ENCODE measurements at regions of chr1 and their contacts with region 1.

Region 1: GRCh38 chr1:226407497-226408284 is at the start of gene PARP1:
- DNase-seq: no peak
- H3K4me3 ChIP-seq: peak within 1 kb of the TSS; percentile 81
- H3K27ac ChIP-seq: peak within 1 kb of the TSS; percentile 52
- H3K27me3 ChIP-seq: peaks cover 7% of the 10 kb centered on the region
- CTCF ChIP-seq: peak; percentile 31; the same call in 1 of the 2 replicates
- polyA plus RNA-seq, gene PARP1: 101 and 111 TPM in 2 replicates

Region 2: DNA sequence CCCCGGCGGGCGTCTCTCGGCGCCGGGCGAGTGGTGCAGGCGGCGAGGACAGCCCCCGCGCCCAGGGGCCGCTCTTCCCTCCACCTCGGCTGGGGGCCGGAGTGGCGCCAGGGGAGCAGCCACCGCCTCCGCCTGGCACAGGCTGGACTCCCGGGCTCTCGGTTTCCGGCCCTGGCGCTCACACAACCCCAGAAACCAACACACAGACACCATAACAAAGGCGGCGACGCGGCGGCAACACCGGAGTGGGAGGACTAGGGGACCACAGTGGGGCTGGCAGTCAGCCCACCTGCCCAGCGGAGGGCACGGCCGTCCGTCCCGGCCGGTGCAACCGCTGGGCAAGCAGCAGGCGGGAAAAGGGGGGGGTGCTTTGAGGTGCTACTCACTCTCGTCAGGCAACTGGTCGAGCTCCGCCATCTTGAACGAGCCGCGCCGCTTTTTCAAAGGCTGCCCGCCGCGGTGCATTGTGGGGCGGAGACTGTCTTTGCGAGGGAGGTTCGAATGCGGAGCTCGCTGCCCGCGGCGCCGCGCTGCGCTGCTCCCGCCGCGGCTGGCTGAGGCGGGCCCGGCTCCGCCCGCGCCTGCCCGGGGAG is 98.9 kb before region 1 on chr1 and contains the start of gene LIN9:
- CTCF ChIA-PET with region 1: interaction called, 17 read pairs
- POLR2A ChIA-PET with region 1: no interaction called
- DNase-seq: peak; percentile 72
- H3K4me3 ChIP-seq: peak within 1 kb of the TSS; percentile 91
- H3K27ac ChIP-seq: no peak within 1 kb of the TSS
- H3K27me3 ChIP-seq: no peaks in the 10 kb centered on the region
- CTCF ChIP-seq: no peak
- polyA plus RNA-seq, gene LIN9: 1.5 and 2.2 TPM in 2 replicates

Region 3: DNA sequence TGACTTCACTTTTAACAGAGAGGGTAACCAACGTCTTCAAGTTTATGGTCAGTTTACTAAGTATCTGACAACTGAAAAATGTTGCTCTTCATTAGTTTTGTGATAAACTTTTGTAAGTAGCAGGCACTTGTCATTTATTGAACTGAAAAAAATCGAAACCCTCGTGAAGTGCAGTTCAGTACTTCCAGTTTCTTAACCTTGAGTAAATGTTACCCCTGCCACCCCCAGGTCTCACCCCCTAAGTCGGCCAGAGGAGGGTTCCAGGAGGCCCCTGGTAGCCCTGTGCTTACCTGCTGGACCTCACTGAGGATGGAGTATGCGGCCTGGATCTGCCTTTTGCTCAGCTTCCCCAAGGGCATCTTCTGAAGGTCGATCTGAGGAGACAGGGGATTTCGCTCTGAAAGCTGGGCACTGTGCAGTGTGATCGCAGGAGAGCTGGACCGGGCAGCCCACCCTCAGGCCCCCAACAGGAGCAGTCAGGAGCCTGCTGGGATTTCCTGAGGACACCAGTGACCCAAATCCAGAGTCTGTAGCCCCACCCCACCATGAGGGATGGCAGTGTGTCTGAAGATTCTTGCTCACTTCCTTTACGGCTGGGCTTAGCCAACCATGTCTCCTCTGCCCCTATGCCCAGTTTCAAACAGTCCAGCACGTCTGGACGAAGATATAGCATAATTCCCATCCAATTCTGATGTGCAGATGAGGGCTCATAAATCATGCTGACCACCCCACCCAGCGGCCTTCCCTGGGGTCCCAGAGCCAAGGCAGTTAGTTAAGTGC is 37.4 kb before region 1 on chr1:
- CTCF ChIA-PET with region 1: interaction called, 10 read pairs
- POLR2A ChIA-PET with region 1: no interaction called
- DNase-seq: no peak
- H3K4me3 ChIP-seq: no peak overlapping the region
- H3K27ac ChIP-seq: no peak overlapping the region
- H3K27me3 ChIP-seq: no peaks in the 10 kb centered on the region
- CTCF ChIP-seq: no peak

Region 4: DNA sequence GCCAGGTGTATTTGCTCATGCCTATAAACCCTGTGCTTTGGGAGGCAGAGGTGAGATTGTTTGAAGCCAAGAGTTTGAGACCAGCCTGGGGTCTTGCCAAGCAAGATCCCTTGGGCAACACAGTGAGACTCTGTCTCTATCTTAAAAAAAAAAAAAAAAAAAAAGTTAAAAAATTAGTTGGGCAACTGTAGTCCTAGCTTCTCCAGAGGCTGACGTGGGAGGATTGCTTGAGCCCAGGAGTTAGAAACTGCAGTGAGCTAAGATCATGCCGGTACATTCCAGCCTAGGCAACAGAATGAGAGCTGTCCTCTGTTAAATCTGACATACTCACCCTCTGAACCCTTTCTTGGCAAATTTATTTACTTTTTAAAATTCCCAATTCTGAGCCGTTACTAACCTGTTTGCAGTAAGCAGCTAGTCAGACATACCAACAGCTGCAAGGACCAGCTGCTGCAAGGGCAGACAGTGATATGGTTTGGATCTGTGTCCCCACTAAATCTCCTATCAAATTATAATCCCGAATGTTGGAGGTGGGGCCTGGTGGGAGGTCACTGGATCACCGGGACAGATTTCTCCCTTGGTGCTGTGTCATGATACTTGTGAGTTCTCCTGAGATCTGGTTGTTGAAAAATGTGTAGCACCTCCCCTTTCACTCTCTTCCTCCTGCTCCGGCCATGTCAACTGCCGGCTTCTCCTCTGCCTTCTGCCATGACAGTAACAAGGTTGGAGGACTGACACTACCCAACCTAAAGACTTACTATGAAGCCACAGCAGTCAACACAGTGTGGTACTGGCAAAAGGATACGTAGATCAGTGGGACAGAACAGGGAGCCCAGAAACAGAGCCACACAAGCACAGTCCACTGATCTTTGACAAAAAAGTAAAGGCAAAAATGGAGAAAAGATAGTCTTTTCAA is 10.4 kb before region 1 on chr1:
- CTCF ChIA-PET with region 1: interaction called, 14 read pairs
- POLR2A ChIA-PET with region 1: no interaction called
- DNase-seq: no peak
- H3K4me3 ChIP-seq: no peak overlapping the region
- H3K27ac ChIP-seq: no peak overlapping the region
- H3K27me3 ChIP-seq: no peaks in the 10 kb centered on the region
- CTCF ChIP-seq: no peak

Region 5: GRCh38 chr1:226417830-226418546 is 10.3 kb after region 1 on chr1:
- CTCF ChIA-PET with region 1: interaction called, 28 read pairs
- POLR2A ChIA-PET with region 1: no interaction called
- DNase-seq: no peak
- H3K4me3 ChIP-seq: no peak overlapping the region
- H3K27ac ChIP-seq: no peak overlapping the region
- H3K27me3 ChIP-seq: peaks cover 29% of the 10 kb centered on the region
- CTCF ChIP-seq: no peak

Region 6: GRCh38 chr1:226424228-226425003 is 16.7 kb after region 1 on chr1:
- CTCF ChIA-PET with region 1: interaction called, 28 read pairs
- POLR2A ChIA-PET with region 1: no interaction called
- DNase-seq: no peak
- H3K4me3 ChIP-seq: no peak overlapping the region
- H3K27ac ChIP-seq: no peak overlapping the region
- H3K27me3 ChIP-seq: peaks cover 9% of the 10 kb centered on the region
- CTCF ChIP-seq: peak; percentile 51

Measured in AG04450 (cell line).